WTC11 (cell line): ENCODE measurements at regions of chr2 and their contacts with region 1.

Region 1: GRCh38 chr2:26577434-26578112 is 63.6 kb downstream of the CIB4 start:
- DNase-seq: peak; percentile 80
- ATAC-seq: peak; percentile 95
- H3K4me3 Mint-ChIP-seq: no peak overlapping the region
- H3K27ac Mint-ChIP-seq: no peak overlapping the region
- H3K4me1 Mint-ChIP-seq: peaks cover 6% of the 10 kb centered on the region
- H3K27me3 Mint-ChIP-seq: peaks cover 24% of the 10 kb centered on the region
- CTCF ChIP-seq: peak; percentile 99

Region 2: DNA sequence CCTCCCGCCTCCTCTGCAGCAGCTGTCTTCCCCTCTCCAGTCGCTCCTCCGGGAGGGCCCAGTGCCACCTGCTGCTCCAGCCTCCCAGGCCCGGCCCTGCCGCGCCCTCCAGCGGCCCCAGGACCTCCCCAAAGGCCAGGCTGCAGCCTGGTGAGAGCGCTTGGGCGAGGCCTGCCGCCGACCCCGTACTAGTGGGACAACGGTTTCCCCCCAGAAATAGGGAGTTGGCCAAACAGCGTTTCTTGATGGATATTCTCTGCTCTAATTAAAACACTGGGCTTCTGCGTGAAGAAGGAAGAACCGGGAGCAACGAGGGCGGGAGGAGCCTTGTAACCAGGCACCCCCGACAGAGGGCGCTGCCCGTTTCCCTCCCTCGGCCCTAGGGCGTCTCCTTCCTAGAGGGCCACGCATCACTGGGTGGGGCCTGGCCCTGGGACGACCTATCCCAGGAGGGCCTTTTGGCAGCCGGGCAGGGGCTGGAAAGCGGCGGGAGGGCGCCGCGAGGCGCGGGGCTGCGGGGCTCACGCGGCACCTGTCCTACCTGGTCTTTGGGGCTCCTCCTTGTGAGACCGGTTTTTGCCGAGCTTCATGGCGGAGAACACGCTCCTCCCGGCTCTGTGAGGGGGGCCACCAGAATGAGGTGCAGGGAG is 74.2 kb before region 1 on chr2:
- CTCF ChIA-PET with region 1: interaction called, 23 read pairs
- POLR2A ChIA-PET with region 1: no interaction called
- DNase-seq: peak; percentile 92
- ATAC-seq: peak; percentile 96
- H3K4me3 Mint-ChIP-seq: peak overlapping the region; percentile 72
- H3K27ac Mint-ChIP-seq: no peak overlapping the region
- H3K4me1 Mint-ChIP-seq: peaks cover 10% of the 10 kb centered on the region
- H3K27me3 Mint-ChIP-seq: peaks cover 16% of the 10 kb centered on the region
- CTCF ChIP-seq: peak; percentile 83

Region 3: DNA sequence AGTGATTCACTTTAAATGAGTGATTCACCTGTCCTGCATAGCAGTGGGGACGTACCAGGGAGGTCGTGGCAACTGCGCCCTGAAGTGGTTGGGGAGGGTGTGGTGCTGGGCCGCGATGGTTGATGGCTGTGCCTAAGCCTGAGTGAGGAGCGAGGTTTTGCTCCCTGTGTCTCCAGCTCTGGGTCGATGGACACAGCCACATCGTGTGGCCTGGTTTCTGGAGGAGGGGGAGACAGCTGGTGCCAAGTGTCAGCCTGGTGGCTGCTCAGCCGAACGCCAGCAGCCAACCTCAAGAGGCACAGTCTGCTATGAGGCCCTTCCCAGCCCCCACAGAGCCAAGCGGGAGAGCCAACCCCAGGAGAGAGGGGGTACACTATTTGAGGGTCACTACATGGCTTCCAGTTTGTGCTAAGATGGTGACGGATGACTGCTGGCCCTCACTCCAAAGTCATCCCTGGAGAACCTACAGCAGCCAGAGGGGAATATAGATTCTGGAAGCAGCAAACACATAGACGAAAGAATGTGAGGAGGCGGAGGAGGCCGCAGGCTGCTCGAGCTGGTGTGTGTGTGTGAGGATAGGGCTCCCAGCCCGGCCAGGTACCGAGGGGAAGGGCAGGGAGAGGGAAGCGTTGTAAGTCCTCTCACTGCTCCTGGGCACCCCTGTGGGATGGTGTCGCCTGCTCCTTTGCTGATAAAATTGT is 41.1 kb before region 1 on chr2:
- CTCF ChIA-PET with region 1: interaction called, 37 read pairs
- POLR2A ChIA-PET with region 1: no interaction called
- DNase-seq: no peak
- ATAC-seq: no peak
- H3K4me3 Mint-ChIP-seq: no peak overlapping the region
- H3K27ac Mint-ChIP-seq: no peak overlapping the region
- H3K4me1 Mint-ChIP-seq: peaks cover 16% of the 10 kb centered on the region
- H3K27me3 Mint-ChIP-seq: no peaks in the 10 kb centered on the region; the same call in 1 of the 2 replicates
- CTCF ChIP-seq: no peak

Region 4: DNA sequence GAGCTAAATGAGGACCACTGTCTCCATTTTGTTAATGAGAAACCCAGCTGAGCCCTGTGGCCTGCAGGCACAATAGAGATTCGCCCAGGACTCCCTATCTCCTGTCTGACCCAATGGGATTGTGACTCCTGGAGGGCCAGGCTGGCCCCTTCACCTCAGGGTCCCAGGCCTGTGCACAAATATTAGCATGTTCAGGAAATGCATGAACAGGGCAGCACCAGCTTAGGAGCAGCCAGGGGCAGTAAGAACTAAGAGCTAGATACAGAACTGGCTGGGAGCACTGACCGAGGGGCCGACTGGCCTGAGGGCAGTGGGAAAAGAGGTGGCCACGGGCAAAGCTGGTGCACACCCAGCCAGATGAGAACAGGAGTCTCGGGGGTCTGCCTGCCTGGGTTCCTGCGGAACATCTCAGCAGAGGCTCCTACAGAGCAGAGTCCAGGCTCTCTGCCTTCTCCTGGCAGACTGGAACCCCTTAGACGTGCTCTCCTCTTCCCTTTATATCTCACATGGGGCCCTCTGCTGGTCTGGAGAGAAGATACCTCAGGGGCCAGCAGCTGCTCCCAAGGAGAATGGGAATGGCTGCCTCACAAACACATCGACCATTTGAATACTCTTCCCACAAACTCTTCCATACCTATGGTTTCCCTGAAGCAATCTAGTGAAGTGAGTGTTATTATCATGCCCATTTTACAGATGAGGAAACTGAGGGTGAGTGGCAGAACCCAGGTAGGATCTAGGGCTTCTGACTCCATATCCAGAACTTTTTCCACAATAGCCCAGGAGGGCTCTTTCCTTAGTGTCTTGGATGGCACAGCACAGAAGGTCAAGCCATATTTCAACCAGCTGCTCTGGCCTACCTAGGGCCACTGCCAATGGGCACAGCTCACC is 22.1 kb before region 1 on chr2:
- CTCF ChIA-PET with region 1: interaction called, 83 read pairs
- POLR2A ChIA-PET with region 1: no interaction called
- DNase-seq: no peak
- ATAC-seq: peak; percentile 49
- H3K4me3 Mint-ChIP-seq: no peak overlapping the region
- H3K27ac Mint-ChIP-seq: no peak overlapping the region
- H3K4me1 Mint-ChIP-seq: peaks cover 14% of the 10 kb centered on the region
- H3K27me3 Mint-ChIP-seq: peaks cover 10% of the 10 kb centered on the region
- CTCF ChIP-seq: no peak

Region 5: DNA sequence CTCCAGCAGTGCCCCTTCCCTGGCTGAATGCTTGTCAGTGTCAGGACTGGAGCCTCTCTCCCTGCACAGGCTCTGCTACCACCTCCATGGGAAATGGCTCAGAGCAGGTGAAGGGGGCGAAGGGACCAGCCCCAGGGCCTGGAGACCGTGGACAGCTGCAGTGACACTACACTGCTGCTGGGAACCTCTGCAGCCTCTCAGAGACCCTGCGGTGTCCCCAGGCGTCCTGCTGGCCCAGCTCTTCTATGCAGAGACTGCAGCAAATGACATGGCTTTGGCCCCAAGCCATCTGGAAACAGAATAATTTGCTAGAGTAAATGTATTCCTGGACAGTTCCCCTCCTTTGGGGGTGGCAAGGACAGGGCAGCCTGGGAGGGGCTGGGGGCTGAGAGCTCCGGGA is 10.4 kb after region 1 on chr2:
- CTCF ChIA-PET with region 1: interaction called, 16 read pairs
- POLR2A ChIA-PET with region 1: no interaction called
- DNase-seq: peak; percentile 8
- ATAC-seq: no peak
- H3K4me3 Mint-ChIP-seq: no peak overlapping the region
- H3K27ac Mint-ChIP-seq: no peak overlapping the region
- H3K4me1 Mint-ChIP-seq: no peaks in the 10 kb centered on the region
- H3K27me3 Mint-ChIP-seq: peaks cover 8% of the 10 kb centered on the region
- CTCF ChIP-seq: no peak